Activated B cell treated with CpG ODN at 0.5 μM for 24 hours (primary cell): ENCODE measurements at regions of chr6 and their contacts with region 1.

Region 1: GRCh38 chr6:129498950-129499842 is 210.8 kb downstream of the ARHGAP18 start:
- DNase-seq: no peak
- ATAC-seq: peak; percentile 79
- H3K4me3 Mint-ChIP-seq: peak overlapping the region; percentile 29
- H3K27ac Mint-ChIP-seq: peak overlapping the region; percentile 15
- H3K4me1 Mint-ChIP-seq: peaks cover 15% of the 10 kb centered on the region
- H3K27me3 Mint-ChIP-seq: no peaks in the 10 kb centered on the region
- CTCF ChIP-seq: peak; percentile 81

Region 2: GRCh38 chr6:129567374-129567773 is 68.2 kb after region 1 on chr6:
- CTCF ChIA-PET with region 1: interaction called, 5 read pairs
- POLR2A ChIA-PET with region 1: no interaction called
- intact Hi-C with region 1: loop called (anchors 2 kb)
- DNase-seq: no peak
- ATAC-seq: no peak
- H3K4me3 Mint-ChIP-seq: no peak overlapping the region
- H3K27ac Mint-ChIP-seq: no peak overlapping the region
- H3K4me1 Mint-ChIP-seq: no peaks in the 10 kb centered on the region
- H3K27me3 Mint-ChIP-seq: no peaks in the 10 kb centered on the region
- CTCF ChIP-seq: no peak

Region 3: DNA sequence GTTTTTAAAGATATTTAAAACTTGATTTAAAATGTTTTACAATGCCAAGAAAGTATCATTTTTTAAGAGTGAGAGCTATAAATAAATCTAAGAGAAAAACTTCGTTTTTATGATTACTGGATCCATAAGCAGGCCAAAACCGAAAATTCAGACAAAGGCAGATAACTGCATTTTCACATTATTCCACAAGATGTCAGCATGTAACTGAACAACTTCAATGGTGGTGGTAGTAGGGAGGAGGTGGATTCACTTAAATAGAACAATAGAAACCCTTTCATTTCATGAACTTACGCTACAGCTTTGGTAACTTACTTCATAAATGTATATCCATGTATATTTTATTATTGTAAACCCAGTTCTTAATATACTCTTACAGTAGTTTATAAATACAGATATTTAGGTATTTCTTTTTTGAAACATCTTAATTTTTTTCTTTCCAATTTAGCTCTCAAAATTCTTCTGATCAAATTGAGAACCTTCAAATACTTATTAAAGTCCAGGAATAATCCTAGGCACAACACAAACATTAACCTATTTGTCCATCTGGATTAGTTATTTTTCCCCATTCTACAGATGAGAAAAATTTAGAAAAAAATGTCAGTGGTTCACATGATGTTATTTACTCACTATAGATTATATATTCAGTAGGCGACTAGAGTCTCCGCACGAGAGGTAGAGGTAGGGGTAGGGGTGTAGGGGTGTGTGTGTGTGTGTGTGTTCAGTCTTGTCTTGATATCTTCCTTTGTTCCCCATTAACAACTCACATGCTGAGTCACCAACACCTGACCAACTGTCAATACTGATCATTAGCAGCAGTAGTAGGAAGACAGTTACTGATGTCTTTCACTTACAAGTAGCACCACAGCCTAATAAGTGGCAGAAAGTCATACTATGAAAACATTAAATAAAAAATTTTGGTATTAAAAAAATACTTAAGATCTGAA is 99.3 kb after region 1 on chr6:
- CTCF ChIA-PET with region 1: interaction called, 20 read pairs
- POLR2A ChIA-PET with region 1: no interaction called
- intact Hi-C with region 1: loop called (anchors 1 kb)
- DNase-seq: no peak
- ATAC-seq: peak; percentile 93
- H3K4me3 Mint-ChIP-seq: no peak overlapping the region
- H3K27ac Mint-ChIP-seq: no peak overlapping the region
- H3K4me1 Mint-ChIP-seq: peaks cover 5% of the 10 kb centered on the region
- H3K27me3 Mint-ChIP-seq: no peaks in the 10 kb centered on the region
- CTCF ChIP-seq: peak; percentile 53

Region 4: GRCh38 chr6:129936329-129937165 is 437.4 kb after region 1 on chr6:
- CTCF ChIA-PET with region 1: no interaction called
- POLR2A ChIA-PET with region 1: no interaction called
- intact Hi-C with region 1: loop called (anchors 1 kb)
- DNase-seq: no peak
- ATAC-seq: peak; percentile 50
- H3K4me3 Mint-ChIP-seq: no peak overlapping the region
- H3K27ac Mint-ChIP-seq: no peak overlapping the region
- H3K4me1 Mint-ChIP-seq: peaks cover 4% of the 10 kb centered on the region
- H3K27me3 Mint-ChIP-seq: peaks cover 18% of the 10 kb centered on the region
- CTCF ChIP-seq: peak; percentile 42

Region 5: GRCh38 chr6:130697995-130698535 is 1198.9 kb after region 1 on chr6:
- CTCF ChIA-PET with region 1: no interaction called
- POLR2A ChIA-PET with region 1: no interaction called
- intact Hi-C with region 1: loop called (anchors 2 kb)
- DNase-seq: no peak
- ATAC-seq: peak; percentile 64
- H3K4me3 Mint-ChIP-seq: no peak overlapping the region
- H3K27ac Mint-ChIP-seq: no peak overlapping the region
- H3K4me1 Mint-ChIP-seq: no peaks in the 10 kb centered on the region
- H3K27me3 Mint-ChIP-seq: peaks cover 8% of the 10 kb centered on the region
- CTCF ChIP-seq: no peak

Region 6: DNA sequence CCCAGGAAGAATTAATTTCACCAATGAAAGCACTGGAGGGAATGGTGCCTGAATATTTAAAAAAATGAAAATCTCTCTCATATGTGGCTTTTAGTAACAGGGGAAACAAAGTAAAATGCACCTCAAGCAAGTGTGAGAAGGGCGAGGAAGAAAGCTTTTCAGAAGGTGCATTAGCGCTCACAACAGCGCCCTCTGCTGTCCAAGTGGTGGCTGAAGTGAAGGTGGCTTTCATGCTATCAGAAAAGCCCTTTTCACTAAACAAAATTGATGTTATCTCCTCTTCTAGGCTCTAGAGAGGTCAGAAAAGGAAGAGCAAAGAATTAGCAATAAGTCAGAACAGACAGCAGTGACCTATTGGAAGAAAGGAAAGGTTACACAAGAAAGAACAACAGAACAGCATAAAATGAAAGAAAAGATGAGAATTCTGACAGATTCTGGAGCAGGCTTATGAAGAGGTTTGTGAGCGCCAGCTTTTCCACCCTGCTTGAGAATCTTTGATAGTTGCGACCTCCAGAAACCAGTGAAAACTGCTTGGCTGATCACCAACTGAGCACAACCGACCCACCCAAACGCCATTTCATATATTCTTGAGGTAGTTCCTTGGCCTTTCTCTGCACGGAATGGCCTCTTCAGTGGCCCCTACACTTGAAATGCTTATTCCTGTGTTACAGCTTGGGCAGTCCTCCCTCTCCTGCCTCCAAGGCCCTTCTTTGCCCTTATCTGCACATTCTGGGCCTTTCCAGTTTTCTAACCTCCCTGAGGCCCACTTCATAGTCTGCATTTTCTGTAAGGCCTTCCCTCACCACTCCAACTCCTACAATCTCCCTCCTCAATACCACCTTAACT is 1373.3 kb after region 1 on chr6:
- CTCF ChIA-PET with region 1: interaction called, 5 read pairs
- POLR2A ChIA-PET with region 1: no interaction called
- intact Hi-C with region 1: loop called (anchors 1 kb)
- DNase-seq: peak; percentile 37
- ATAC-seq: no peak
- H3K4me3 Mint-ChIP-seq: no peak overlapping the region
- H3K27ac Mint-ChIP-seq: no peak overlapping the region
- H3K4me1 Mint-ChIP-seq: peaks cover 4% of the 10 kb centered on the region
- H3K27me3 Mint-ChIP-seq: no peaks in the 10 kb centered on the region
- CTCF ChIP-seq: peak; percentile 82